Prostate gland (tissue), 2 donors: ENCODE measurements at regions of chr13 and their contacts with region 1.

Region 1: GRCh38 chr13:20940083-20940880 is 37.7 kb upstream of the XPO4 start:
- DNase-seq: no peak
- H3K4me3 ChIP-seq: no peak overlapping the region
- H3K27ac ChIP-seq: no peak overlapping the region
- H3K4me1 ChIP-seq: no peaks in the 10 kb centered on the region
- H3K27me3 ChIP-seq: no peaks in the 10 kb centered on the region
- CTCF ChIP-seq: no peak
- POLR2A ChIP-seq: no peak

Region 2: DNA sequence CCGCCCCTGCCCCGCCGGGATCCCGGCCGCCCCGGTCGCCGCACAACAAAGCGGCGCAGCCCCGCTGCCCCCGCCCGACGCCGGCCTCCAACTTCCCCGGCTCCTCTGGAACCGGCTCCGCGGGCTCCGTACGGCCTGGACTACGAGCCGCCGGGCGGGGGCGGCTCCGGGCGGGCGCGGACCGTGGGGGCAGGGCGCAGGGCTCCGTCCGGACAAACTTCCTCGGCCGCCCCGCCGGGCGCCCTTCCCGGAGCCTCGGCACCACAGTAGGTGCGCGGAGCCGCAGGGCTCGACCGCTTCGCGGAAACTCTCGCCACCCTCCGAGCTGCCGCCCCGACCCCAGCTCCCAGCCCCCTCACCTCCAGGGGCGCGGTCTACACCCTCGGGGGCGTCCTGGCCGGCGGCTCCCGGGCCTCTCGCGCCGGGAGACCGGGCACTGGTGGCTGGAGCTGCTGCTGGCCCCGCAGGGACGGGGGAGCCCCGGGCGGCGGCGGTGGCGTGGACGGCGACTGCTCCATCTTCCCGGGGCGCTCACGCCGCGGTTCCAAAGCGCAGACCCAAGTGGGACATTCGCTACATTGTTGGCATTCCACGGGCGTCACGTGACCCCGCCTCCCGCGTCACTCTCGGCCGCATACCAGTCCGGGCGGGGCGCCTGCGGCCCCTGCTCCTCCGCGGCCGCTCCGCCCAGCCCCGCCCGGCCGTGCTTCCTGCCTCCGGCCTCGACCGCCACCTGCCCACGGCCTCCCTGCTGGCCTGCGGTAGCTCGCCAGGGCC is 120.9 kb after region 1 on chr13 and contains the start of gene LATS2:
- intact Hi-C with region 1: loop called (anchors 5 kb)
- DNase-seq: peak; percentile 97
- H3K4me3 ChIP-seq: peak within 1 kb of the TSS; percentile 88 to 99
- H3K27ac ChIP-seq: peak within 1 kb of the TSS; percentile 99 to 100
- H3K4me1 ChIP-seq: no peaks in the 10 kb centered on the region
- H3K27me3 ChIP-seq: no peaks in the 10 kb centered on the region
- CTCF ChIP-seq: peak in 3 of 4 experiments; percentile 65 to 78 (median 74)
- POLR2A ChIP-seq: peak; percentile 92
- total RNA-seq, gene LATS2: 22.0 to 27.4 TPM